B cell (primary cell): ENCODE measurements at regions of chr3 and their contacts with region 1.

Region 1: GRCh38 chr3:4712143-4712542 is 219.0 kb downstream of the ITPR1 start:
- DNase-seq: no peak
- ATAC-seq: no peak
- H3K4me3 ChIP-seq: no peak overlapping the region
- H3K4me3 Mint-ChIP-seq: no peak overlapping the region
- H3K27ac ChIP-seq: no peak overlapping the region
- H3K27ac Mint-ChIP-seq: no peak overlapping the region
- H3K4me1 ChIP-seq: no peaks in the 10 kb centered on the region
- H3K4me1 Mint-ChIP-seq: no peaks in the 10 kb centered on the region
- H3K27me3 ChIP-seq: no peaks in the 10 kb centered on the region
- H3K27me3 Mint-ChIP-seq: no peaks in the 10 kb centered on the region
- CTCF ChIP-seq: no peak

Region 2: GRCh38 chr3:4588466-4588865 is 123.7 kb before region 1 on chr3:
- CTCF ChIA-PET with region 1: no interaction called
- POLR2A ChIA-PET with region 1: no interaction called
- intact Hi-C with region 1: no loop called
- DNase-seq: no peak
- ATAC-seq: no peak
- H3K4me3 ChIP-seq: no peak overlapping the region
- H3K4me3 Mint-ChIP-seq: peak overlapping the region; percentile 20
- H3K27ac ChIP-seq: peak overlapping the region in 1 of 2 donors; percentile 7
- H3K27ac Mint-ChIP-seq: peak overlapping the region; percentile 62
- H3K4me1 ChIP-seq: peaks cover 41 to 46% of the 10 kb centered on the region in 2 donors
- H3K4me1 Mint-ChIP-seq: peaks cover 91% of the 10 kb centered on the region
- H3K27me3 ChIP-seq: no peaks in the 10 kb centered on the region
- H3K27me3 Mint-ChIP-seq: no peaks in the 10 kb centered on the region
- CTCF ChIP-seq: no peak

Region 3: DNA sequence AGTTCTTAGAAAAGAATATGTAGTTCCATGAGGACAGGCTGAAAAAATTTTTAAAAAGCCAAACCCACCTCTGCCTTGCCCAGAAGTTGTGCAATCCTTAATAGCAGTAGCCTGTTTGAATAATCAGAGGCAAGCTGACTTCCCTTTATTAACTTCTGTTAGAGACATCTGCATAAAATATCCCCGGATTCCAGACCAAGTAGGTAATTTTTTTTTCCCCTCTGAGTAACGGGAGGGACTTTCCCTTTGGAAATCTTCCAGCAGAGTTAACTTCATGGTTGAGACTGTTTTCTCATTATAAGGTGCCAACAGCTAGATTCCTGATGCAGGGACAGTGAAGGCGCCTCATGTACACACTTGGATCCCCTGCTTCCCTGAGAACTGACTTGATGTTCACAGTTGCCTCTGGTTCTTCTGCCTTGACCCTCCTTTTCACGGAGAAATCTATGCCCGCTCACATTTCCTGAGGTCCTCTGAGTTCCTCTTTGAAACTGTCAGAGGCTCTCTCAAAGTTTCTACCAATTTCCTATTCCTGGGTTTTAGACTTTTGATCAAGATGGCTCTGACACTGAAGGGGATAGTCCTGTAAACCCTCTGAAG is 39.5 kb after region 1 on chr3:
- CTCF ChIA-PET with region 1: interaction called, 13 read pairs
- POLR2A ChIA-PET with region 1: no interaction called
- intact Hi-C with region 1: no loop called
- DNase-seq: no peak
- ATAC-seq: no peak
- H3K4me3 ChIP-seq: no peak overlapping the region
- H3K4me3 Mint-ChIP-seq: no peak overlapping the region
- H3K27ac ChIP-seq: no peak overlapping the region
- H3K27ac Mint-ChIP-seq: peak overlapping the region; percentile 48
- H3K4me1 ChIP-seq: peaks cover 0 to 16% of the 10 kb centered on the region in 2 donors
- H3K4me1 Mint-ChIP-seq: peaks cover 27% of the 10 kb centered on the region
- H3K27me3 ChIP-seq: no peaks in the 10 kb centered on the region
- H3K27me3 Mint-ChIP-seq: no peaks in the 10 kb centered on the region
- CTCF ChIP-seq: no peak

Region 4: DNA sequence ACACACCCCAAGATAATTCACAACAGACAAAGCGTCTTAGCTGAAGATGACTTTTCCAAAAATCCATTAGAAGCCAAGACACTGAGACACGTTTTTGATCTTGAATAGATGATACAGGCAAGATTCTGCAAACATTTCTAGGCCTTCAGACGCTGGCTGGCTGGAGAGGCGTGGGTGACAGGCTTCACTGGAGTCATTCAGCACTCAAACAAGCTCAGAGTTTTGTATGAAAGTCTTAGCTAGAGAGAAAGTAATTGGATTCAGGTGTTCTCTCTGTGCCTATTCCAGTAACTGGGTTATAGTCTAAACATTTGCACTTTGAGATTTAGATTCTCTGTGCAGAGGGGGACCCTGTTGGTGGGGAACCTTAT is 119.4 kb after region 1 on chr3:
- CTCF ChIA-PET with region 1: interaction called, 12 read pairs
- POLR2A ChIA-PET with region 1: no interaction called
- intact Hi-C with region 1: loop called (anchors 10 kb)
- DNase-seq: no peak
- ATAC-seq: peak; percentile 11
- H3K4me3 ChIP-seq: peak overlapping the region in 1 of 5 experiments; percentile 54
- H3K4me3 Mint-ChIP-seq: peak overlapping the region; percentile 75
- H3K27ac ChIP-seq: peak overlapping the region in 1 of 2 donors; percentile 64
- H3K27ac Mint-ChIP-seq: peak overlapping the region; percentile 80
- H3K4me1 ChIP-seq: peaks cover 36 to 46% of the 10 kb centered on the region in 2 donors
- H3K4me1 Mint-ChIP-seq: peaks cover 62% of the 10 kb centered on the region
- H3K27me3 ChIP-seq: no peaks in the 10 kb centered on the region
- H3K27me3 Mint-ChIP-seq: no peaks in the 10 kb centered on the region
- CTCF ChIP-seq: no peak

Region 5: GRCh38 chr3:5026331-5027218 is 314.4 kb after region 1 on chr3:
- CTCF ChIA-PET with region 1: interaction called, 79 read pairs
- POLR2A ChIA-PET with region 1: no interaction called
- intact Hi-C with region 1: loop called (anchors 1 kb)
- DNase-seq: peak; percentile 80
- ATAC-seq: peak; percentile 78
- H3K4me3 ChIP-seq: peak overlapping the region; percentile 21 to 64 (median 57)
- H3K4me3 Mint-ChIP-seq: peak overlapping the region; percentile 91
- H3K27ac ChIP-seq: peak overlapping the region in 1 of 2 donors; percentile 65
- H3K27ac Mint-ChIP-seq: peak overlapping the region; percentile 84
- H3K4me1 ChIP-seq: peaks cover 4 to 18% of the 10 kb centered on the region in 2 donors
- H3K4me1 Mint-ChIP-seq: peaks cover 41% of the 10 kb centered on the region
- H3K27me3 ChIP-seq: no peaks in the 10 kb centered on the region
- H3K27me3 Mint-ChIP-seq: no peaks in the 10 kb centered on the region
- CTCF ChIP-seq: peak; percentile 59

Region 6: GRCh38 chr3:5057857-5058324 is 345.7 kb after region 1 on chr3:
- CTCF ChIA-PET with region 1: interaction called, 391 read pairs
- POLR2A ChIA-PET with region 1: interaction called, 3 read pairs
- intact Hi-C with region 1: loop called (anchors 1 kb)
- DNase-seq: peak; percentile 86
- ATAC-seq: peak; percentile 89
- H3K4me3 ChIP-seq: no peak overlapping the region
- H3K4me3 Mint-ChIP-seq: no peak overlapping the region
- H3K27ac ChIP-seq: no peak overlapping the region
- H3K27ac Mint-ChIP-seq: no peak overlapping the region
- H3K4me1 ChIP-seq: peaks cover 37 to 44% of the 10 kb centered on the region in 2 donors
- H3K4me1 Mint-ChIP-seq: peaks cover 36% of the 10 kb centered on the region
- H3K27me3 ChIP-seq: peaks cover 0 to 4% (median 0%) of the 10 kb centered on the region in 4 experiments
- H3K27me3 Mint-ChIP-seq: peaks cover 7% of the 10 kb centered on the region
- CTCF ChIP-seq: peak; percentile 82